ENCODE measurements at regions of chr11 and their contacts with region 1.

Region 1: GRCh38 chr11:46529095-46529905 is 64.5 kb downstream of the AMBRA1 start:
- DNase-seq: peak; percentile 55
- ATAC-seq: peak; percentile 93
- H3K4me3 ChIP-seq: no peak overlapping the region
- H3K27ac ChIP-seq: no peak overlapping the region
- H3K4me1 ChIP-seq: peaks cover 23% of the 10 kb centered on the region
- H3K27me3 ChIP-seq: no peaks in the 10 kb centered on the region
- CTCF ChIP-seq: peak; percentile 87
- EP300 ChIP-seq: no peak
- POLR2A ChIP-seq: no peak
- RAD21 ChIP-seq: peak; percentile 54

Region 2: GRCh38 chr11:45860764-45861510 is 668.4 kb before region 1 on chr11:
- CTCF ChIA-PET with region 1: no interaction called
- POLR2A ChIA-PET with region 1: no interaction called
- in situ Hi-C with region 1: no loop called
- intact Hi-C with region 1: no loop called
- DNase-seq: no peak
- ATAC-seq: no peak
- H3K4me3 ChIP-seq: no peak overlapping the region
- H3K27ac ChIP-seq: no peak overlapping the region
- H3K4me1 ChIP-seq: no peaks in the 10 kb centered on the region
- H3K27me3 ChIP-seq: no peaks in the 10 kb centered on the region
- CTCF ChIP-seq: no peak
- EP300 ChIP-seq: no peak
- POLR2A ChIP-seq: no peak
- RAD21 ChIP-seq: no peak

Region 3: DNA sequence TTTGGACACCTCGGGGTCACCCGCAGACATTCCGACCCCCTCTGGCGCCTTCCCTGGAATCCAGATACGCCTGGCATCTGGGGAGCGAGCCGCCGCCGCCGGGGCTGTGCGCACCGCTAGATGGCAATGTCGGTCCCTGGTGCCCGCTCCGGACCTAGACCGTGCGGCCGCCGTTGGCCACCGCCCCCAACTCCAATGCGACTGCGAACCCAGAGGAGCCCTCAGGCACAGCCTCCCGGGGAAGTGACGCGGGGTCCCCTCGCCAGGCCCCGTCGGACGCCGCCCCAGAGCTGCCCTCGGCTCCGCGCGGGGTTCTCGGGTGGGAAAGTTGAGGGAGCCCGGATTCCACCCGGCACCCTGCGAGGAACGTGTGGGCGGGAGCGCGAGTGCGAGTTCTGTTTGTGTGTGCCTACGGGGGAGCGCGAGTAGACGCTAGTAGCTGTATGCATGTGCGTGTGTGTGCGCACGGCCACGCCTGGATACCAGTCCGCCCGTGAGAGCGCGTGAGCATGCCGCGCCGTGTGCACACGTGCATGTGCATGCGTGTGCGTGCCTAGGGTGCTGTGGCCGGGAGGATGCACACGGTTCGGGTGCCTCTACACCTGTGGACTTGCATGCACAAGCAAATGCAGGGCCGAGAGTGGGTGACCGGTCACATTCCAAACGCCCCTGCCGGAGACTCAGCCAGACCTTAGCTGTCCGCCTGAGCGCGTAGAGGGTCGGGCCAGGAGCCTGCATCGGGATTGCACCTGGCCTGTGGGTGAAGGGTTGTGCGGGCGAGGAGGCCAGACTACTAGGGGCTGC is 139.6 kb before region 1 on chr11:
- CTCF ChIA-PET with region 1: interaction called, 9 read pairs
- POLR2A ChIA-PET with region 1: no interaction called
- in situ Hi-C with region 1: loop called (anchors 5 kb)
- intact Hi-C with region 1: no loop called
- DNase-seq: peak; percentile 61
- ATAC-seq: peak; percentile 72
- H3K4me3 ChIP-seq: peak overlapping the region; percentile 58 to 82 (median 61)
- H3K27ac ChIP-seq: no peak overlapping the region
- H3K4me1 ChIP-seq: peaks cover 57% of the 10 kb centered on the region
- H3K27me3 ChIP-seq: peaks cover 13 to 36% of the 10 kb centered on the region in 2 experiments
- CTCF ChIP-seq: peak; percentile 97
- EP300 ChIP-seq: no peak
- POLR2A ChIP-seq: no peak
- RAD21 ChIP-seq: peak; percentile 86

Region 4: DNA sequence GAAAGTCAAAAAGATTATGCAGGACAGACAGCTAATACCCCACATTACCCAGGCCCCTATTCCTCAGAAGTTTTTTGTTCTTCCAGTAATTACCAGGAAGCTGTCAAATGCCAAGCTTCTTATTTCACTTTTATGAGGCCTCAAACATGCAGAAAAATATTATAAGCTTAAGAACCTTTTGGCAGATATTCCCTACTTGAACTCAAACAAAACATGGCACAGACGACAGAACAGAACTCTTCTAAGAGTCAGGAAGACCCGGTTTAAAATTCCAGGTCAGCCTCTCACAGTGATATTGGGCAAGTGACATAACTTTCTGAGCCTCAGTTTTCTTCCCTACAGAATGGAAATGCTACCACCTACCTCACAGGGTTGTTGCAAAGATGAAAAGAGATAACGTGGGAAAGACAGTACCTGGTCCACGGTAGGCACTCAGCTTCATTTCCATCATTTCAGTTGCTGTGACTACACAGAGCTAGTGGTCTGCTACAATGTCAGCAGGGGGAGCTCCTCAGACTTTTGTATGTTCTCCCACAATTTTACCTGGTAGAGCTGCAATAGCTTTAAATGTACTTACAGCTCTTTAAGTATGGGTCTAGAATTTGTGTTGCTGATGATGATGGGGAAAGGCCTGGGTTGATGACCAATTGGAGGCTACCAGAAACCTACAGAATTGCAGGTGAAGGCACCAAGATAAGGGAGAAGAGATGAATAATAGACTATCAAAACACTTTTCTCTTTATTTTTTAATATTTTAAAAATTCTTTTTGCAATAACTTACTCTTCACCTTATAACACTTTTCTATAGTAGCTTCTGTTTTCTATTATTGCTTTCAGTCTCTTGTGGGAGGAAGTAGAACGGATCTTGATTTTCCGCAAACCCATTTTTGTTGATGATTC is 39.4 kb before region 1 on chr11:
- CTCF ChIA-PET with region 1: interaction called, 13 read pairs
- POLR2A ChIA-PET with region 1: no interaction called
- in situ Hi-C with region 1: no loop called
- intact Hi-C with region 1: loop called (anchors 1 kb)
- DNase-seq: peak; percentile 59
- ATAC-seq: peak; percentile 93
- H3K4me3 ChIP-seq: no peak overlapping the region
- H3K27ac ChIP-seq: no peak overlapping the region
- H3K4me1 ChIP-seq: no peaks in the 10 kb centered on the region
- H3K27me3 ChIP-seq: no peaks in the 10 kb centered on the region
- CTCF ChIP-seq: peak; percentile 66
- EP300 ChIP-seq: no peak
- POLR2A ChIP-seq: no peak
- RAD21 ChIP-seq: peak; percentile 65; the same call in 1 of the 2 replicates